ENCODE measurements at regions of chr4 and their contacts with region 1.

Region 1: GRCh38 chr4:105140684-105141490 is 5.8 kb upstream of the TET2 start:
- DNase-seq: no peak
- H3K4me3 ChIP-seq: no peak overlapping the region
- H3K27ac ChIP-seq: no peak overlapping the region
- H3K4me1 ChIP-seq: peaks cover 9% of the 10 kb centered on the region
- H3K27me3 ChIP-seq: no peaks in the 10 kb centered on the region
- CTCF ChIP-seq: peak; percentile 83

Region 2: GRCh38 chr4:105471566-105472176 is 330.8 kb after region 1 on chr4:
- intact Hi-C with region 1: loop called (anchors 2 kb)
- DNase-seq: peak; percentile 29
- H3K4me3 ChIP-seq: peak overlapping the region; percentile 98
- H3K27ac ChIP-seq: peak overlapping the region; percentile 99
- H3K4me1 ChIP-seq: peaks cover 71% of the 10 kb centered on the region
- H3K27me3 ChIP-seq: no peaks in the 10 kb centered on the region
- CTCF ChIP-seq: peak; percentile 82